Activated naive CD4-positive, alpha-beta T cell treated with anti-CD3 and anti-CD28 coated beads for 36 hours (primary cell): ENCODE measurements at regions of chr1 and their contacts with region 1.

Region 1: GRCh38 chr1:37692078-37692833 is at the start of gene CDCA8:
- DNase-seq: peak; percentile 99
- H3K4me3 Mint-ChIP-seq: peak within 1 kb of the TSS; percentile 97
- H3K27ac Mint-ChIP-seq: peak within 1 kb of the TSS; percentile 87
- H3K4me1 Mint-ChIP-seq: peaks cover 35% of the 10 kb centered on the region
- H3K27me3 Mint-ChIP-seq: no peaks in the 10 kb centered on the region
- total RNA-seq, gene CDCA8: 73.6 to 78.6 TPM

Region 2: GRCh38 chr1:37473431-37474045 is 218.7 kb before region 1 on chr1:
- CTCF ChIA-PET with region 1: no interaction called
- intact Hi-C with region 1: no loop called
- DNase-seq: peak; percentile 57
- H3K4me3 Mint-ChIP-seq: peak overlapping the region; percentile 84
- H3K27ac Mint-ChIP-seq: peak overlapping the region; percentile 68
- H3K4me1 Mint-ChIP-seq: peaks cover 33% of the 10 kb centered on the region
- H3K27me3 Mint-ChIP-seq: no peaks in the 10 kb centered on the region

Region 3: GRCh38 chr1:37553927-37554808 is 138.1 kb before region 1 on chr1 and contains the start of gene SNIP1:
- CTCF ChIA-PET with region 1: no interaction called
- intact Hi-C with region 1: loop called (anchors 2 kb)
- DNase-seq: peak; percentile 95
- H3K4me3 Mint-ChIP-seq: peak within 1 kb of the TSS; percentile 91
- H3K27ac Mint-ChIP-seq: peak within 1 kb of the TSS; percentile 86
- H3K4me1 Mint-ChIP-seq: peaks cover 44% of the 10 kb centered on the region
- H3K27me3 Mint-ChIP-seq: no peaks in the 10 kb centered on the region
- total RNA-seq, gene SNIP1: 14.3 to 15.3 TPM

Region 4: DNA sequence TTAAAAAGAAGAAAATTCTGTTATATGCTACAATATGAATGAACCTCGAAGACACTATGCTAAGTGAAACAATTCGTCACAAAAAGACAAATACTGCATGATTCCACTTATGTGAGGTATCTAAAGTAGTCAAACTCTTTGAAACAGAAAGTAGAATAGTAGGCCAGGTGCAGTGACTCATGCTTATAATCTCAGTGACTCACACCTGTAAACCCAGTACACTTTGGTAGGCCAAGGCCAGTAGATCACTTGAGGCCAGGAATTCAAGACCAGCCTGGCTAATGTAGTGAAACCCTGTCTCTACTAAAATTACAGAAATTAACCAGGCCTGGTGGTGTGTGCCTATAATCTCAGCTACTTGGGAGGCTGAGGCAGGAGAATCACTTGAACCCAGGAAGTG is 47.0 kb after region 1 on chr1:
- CTCF ChIA-PET with region 1: no interaction called
- intact Hi-C with region 1: loop called (anchors 1 kb)
- DNase-seq: peak; percentile 45
- H3K4me3 Mint-ChIP-seq: no peak overlapping the region
- H3K27ac Mint-ChIP-seq: no peak overlapping the region
- H3K4me1 Mint-ChIP-seq: peaks cover 6% of the 10 kb centered on the region
- H3K27me3 Mint-ChIP-seq: peaks cover 40% of the 10 kb centered on the region

Region 5: DNA sequence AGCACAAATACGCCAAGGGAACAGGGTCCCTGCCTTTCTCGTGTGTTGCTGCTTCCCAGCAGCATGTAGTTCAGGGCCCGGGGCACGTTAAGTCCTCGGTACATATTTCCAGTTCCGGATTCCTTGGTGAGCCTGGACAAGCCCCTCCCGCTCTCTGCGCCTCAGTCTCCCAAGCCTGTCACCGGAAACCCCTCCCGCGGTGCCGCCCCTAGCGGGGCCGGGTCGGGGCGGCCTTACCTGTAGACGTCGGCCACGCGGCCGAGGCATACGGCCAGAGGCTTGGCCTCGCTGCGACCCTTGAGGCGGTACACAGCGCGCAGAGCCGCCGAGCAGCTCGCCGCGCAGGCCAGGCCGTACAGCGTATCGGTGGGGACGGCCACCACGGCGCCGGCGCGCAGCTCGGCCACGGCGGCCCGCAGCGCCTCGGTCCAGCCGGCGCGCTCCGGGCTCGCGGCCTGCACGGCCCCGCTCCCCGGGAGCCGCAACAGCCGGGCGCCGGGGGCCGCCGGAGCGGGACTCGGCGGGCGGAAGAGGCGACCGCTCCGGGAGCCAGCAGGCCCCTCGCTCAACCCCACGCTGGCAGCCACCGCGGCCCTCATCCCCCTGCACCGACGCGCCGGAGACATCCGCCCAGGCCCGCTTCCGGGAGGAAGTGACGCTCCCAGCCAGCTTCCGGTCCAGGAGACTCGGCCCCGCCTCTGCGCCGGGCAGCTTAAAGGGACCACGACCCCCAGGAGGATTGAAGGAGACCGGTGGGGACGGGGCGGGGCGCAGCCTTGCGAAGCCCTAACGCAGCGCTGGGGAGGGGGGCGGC is 115.5 kb after region 1 on chr1 and contains the starts of genes C1orf122 and YRDC:
- CTCF ChIA-PET with region 1: no interaction called
- intact Hi-C with region 1: loop called (anchors 1 kb)
- DNase-seq: peak; percentile 92
- H3K4me3 Mint-ChIP-seq: peak within 1 kb of the TSS; percentile 95
- H3K27ac Mint-ChIP-seq: peak within 1 kb of the TSS; percentile 93
- H3K4me1 Mint-ChIP-seq: peaks cover 40% of the 10 kb centered on the region
- H3K27me3 Mint-ChIP-seq: no peaks in the 10 kb centered on the region
- total RNA-seq, gene C1orf122: 12.8 to 14.2 TPM
- total RNA-seq, gene YRDC: 31.6 to 31.7 TPM

Region 6: DNA sequence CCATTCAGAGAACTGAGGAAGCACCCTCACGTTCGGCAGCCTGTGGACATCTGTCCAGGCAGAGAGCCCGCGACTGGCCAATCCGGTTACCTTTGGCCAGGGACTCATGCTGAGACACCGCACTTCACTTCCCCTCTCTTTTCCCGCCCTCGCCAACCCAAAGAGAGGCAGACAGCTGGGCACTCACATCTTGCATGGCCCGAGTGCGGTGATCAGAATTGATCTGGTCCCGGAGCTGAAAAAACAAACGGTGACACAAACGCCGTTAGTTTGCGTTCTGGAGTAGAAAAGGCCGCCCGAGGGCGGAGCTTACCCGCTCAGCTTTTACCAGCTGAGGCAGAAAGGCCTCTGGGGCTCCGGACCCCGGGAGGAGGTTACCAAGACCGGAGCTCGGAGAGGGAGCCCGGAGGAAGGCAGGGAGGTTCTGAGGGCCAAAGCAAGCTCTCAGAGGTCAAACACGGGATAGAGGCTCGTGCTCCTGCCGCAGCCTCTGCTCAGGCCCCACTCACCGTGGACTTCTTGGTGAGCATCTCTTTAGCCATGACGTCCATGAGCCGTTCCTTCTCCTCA is 297.2 kb after region 1 on chr1:
- CTCF ChIA-PET with region 1: no interaction called
- intact Hi-C with region 1: loop called (anchors 1 kb)
- DNase-seq: peak; percentile 53
- H3K4me3 Mint-ChIP-seq: peak overlapping the region; percentile 94
- H3K27ac Mint-ChIP-seq: peak overlapping the region; percentile 88
- H3K4me1 Mint-ChIP-seq: peaks cover 19% of the 10 kb centered on the region
- H3K27me3 Mint-ChIP-seq: no peaks in the 10 kb centered on the region

Region 7: DNA sequence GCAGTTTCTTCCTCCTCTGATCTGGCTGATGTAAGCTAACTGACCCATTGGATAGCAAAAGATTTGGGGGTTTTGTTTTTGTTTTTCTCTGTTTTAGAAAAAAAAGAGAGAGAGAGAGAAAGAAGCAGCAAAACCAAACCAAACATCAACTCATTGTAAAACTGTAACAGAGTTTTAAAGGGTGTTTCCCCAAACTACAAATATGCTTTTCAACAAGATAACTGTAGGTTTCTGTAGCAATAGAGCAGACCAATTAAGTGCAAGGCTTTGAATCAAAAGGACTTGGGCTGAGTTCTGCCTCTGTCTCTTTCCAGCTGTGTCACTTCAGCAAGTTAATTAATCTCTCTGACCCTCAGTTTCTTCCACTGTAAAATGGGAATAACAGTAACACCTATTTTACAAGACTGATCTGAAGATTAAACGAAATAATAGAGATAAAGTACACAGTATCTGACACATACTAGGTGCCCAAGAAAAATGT is 1122.8 kb after region 1 on chr1:
- CTCF ChIA-PET with region 1: no interaction called
- intact Hi-C with region 1: no loop called
- DNase-seq: no peak
- H3K4me3 Mint-ChIP-seq: no peak overlapping the region
- H3K27ac Mint-ChIP-seq: no peak overlapping the region
- H3K4me1 Mint-ChIP-seq: peaks cover 9% of the 10 kb centered on the region
- H3K27me3 Mint-ChIP-seq: peaks cover 63% of the 10 kb centered on the region

Region 8: GRCh38 chr1:39196244-39197215 is 1504.3 kb after region 1 on chr1:
- CTCF ChIA-PET with region 1: no interaction called
- intact Hi-C with region 1: loop called (anchors 10 kb)
- DNase-seq: peak; percentile 81
- H3K4me3 Mint-ChIP-seq: peak overlapping the region; percentile 53
- H3K27ac Mint-ChIP-seq: peak overlapping the region; percentile 97
- H3K4me1 Mint-ChIP-seq: peaks cover 81% of the 10 kb centered on the region
- H3K27me3 Mint-ChIP-seq: no peaks in the 10 kb centered on the region